ENCODE measurements at regions of chr2 and their contacts with region 1.

Region 1: DNA sequence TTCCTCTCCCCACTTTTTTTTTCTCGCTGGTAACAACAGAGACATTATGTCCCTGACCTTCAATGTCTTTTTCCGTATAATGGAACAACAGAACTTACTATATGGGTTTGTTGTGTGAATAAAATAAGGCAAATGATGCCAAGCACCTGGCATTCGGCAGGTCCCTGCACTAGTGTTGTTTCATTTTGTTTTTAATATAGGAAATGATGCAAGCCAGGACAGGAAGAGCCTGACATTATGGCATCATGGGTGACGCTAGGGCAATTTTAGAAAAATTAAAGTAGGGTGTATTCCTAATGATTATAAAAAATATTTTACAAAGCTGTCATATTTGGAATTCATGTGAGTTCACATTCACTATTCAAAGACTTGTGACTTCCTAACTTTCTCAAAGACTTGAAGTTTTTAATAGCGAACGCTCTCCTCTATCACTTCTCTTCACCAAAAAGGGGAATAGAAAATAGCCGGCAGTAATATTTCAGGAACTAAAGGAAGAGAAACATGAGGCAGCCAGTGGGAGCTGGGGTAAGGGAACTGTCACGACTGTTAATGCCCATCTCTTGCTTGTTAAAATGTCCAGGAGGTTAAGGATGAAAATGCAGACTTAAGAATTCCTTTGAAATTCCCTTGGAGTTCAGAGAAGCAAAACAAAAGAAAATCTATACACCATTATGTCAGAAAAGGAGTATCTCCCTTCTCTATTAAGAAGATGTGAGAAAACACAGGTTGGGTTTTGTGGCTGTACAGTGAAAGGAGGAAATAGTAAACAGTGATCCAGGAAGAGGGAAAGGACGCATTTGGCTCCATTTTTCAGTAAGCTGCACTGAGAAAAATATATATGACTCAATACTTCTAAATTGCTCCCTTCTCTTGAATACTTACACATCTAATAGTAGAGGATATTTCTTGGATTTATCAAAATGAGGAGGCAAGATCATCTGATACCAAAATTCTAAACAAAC is 60.2 kb downstream of the DPP4 start:
- DNase-seq: peak; percentile 48 to 78 (median 77)
- H3K4me3 ChIP-seq: peak overlapping the region; percentile 40 to 74 (median 73)
- H3K4me3 Mint-ChIP-seq: peak overlapping the region; percentile 57 to 72
- H3K27ac ChIP-seq: peak overlapping the region; percentile 60 to 84
- H3K27ac Mint-ChIP-seq: peak overlapping the region; percentile 77 to 96 (median 90)
- H3K4me1 ChIP-seq: peaks cover 20 to 32% of the 10 kb centered on the region in 2 donors
- H3K4me1 Mint-ChIP-seq: peaks cover 27% of the 10 kb centered on the region
- H3K27me3 ChIP-seq: no peaks in the 10 kb centered on the region
- H3K27me3 Mint-ChIP-seq: peaks cover 0 to 3% (median 0%) of the 10 kb centered on the region in 3 donors
- CTCF ChIP-seq: no peak

Region 2: DNA sequence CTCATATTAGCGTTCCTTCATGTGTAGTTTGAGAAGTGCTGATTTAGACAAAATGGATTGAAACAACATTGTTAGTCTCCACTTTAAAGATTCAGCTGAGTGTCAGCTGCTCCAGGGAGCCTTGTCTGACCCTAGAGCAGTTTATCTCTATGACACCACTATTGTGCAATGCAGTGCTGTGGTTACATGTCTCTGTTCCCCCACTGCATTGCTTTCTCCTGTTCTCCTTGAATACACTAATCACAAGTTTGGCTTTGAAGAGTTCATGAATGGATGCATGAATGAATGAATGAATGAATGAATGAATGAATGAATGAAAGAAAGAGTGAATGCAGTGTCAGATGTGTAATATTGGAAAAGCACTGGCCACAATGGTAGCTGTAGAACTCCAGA is 100.0 kb after region 1 on chr2:
- intact Hi-C with region 1: loop called in 1 of 2 experiments (anchors 5 kb)
- DNase-seq: peak; percentile 51 to 69 (median 62)
- H3K4me3 ChIP-seq: no peak overlapping the region
- H3K4me3 Mint-ChIP-seq: peak overlapping the region in 1 of 2 donors; percentile 15
- H3K27ac ChIP-seq: peak overlapping the region in 1 of 2 donors; percentile 38
- H3K27ac Mint-ChIP-seq: peak overlapping the region in 5 of 7 donors; percentile 25 to 78 (median 60)
- H3K4me1 ChIP-seq: peaks cover 35 to 41% of the 10 kb centered on the region in 2 donors
- H3K4me1 Mint-ChIP-seq: peaks cover 39% of the 10 kb centered on the region
- H3K27me3 ChIP-seq: no peaks in the 10 kb centered on the region
- H3K27me3 Mint-ChIP-seq: peaks cover 0 to 2% (median 2%) of the 10 kb centered on the region in 3 donors
- CTCF ChIP-seq: no peak

Region 3: DNA sequence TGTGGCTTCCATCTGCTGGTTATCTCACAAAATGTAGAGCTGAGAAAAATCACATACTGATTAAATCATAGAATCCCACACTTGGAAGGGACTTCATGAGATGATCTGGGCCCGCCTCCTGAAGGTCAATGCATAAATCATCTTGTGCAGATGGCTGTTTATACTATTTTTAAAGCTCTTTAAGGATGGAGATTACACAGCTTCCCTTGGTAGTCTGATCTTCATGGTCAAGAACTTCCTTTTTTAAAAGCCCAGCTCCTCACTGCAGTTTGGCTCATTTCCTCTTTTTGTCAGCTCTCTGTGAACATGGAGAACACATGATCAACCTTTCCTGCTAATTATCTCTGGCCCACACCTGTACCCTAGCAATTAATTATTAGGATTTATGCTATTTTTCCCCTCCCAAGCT is 112.3 kb after region 1 on chr2:
- intact Hi-C with region 1: loop called in 1 of 2 experiments (anchors 5 kb)
- DNase-seq: peak; percentile 53 to 67 (median 65)
- H3K4me3 ChIP-seq: no peak overlapping the region
- H3K4me3 Mint-ChIP-seq: no peak overlapping the region
- H3K27ac ChIP-seq: peak overlapping the region in 1 of 2 donors; percentile 23
- H3K27ac Mint-ChIP-seq: peak overlapping the region in 5 of 7 donors; percentile 29 to 76 (median 59)
- H3K4me1 ChIP-seq: peaks cover 16 to 17% of the 10 kb centered on the region in 2 donors
- H3K4me1 Mint-ChIP-seq: peaks cover 13% of the 10 kb centered on the region
- H3K27me3 ChIP-seq: no peaks in the 10 kb centered on the region
- H3K27me3 Mint-ChIP-seq: peaks cover 0 to 3% (median 0%) of the 10 kb centered on the region in 3 donors
- CTCF ChIP-seq: no peak

Region 4: GRCh38 chr2:162153608-162154224 is 139.9 kb after region 1 on chr2:
- intact Hi-C with region 1: no loop called
- DNase-seq: peak; percentile 15 to 48 (median 40)
- H3K4me3 ChIP-seq: no peak overlapping the region
- H3K4me3 Mint-ChIP-seq: peak overlapping the region in 1 of 2 donors; percentile 6
- H3K27ac ChIP-seq: no peak overlapping the region
- H3K27ac Mint-ChIP-seq: no peak overlapping the region
- H3K4me1 ChIP-seq: no peaks in the 10 kb centered on the region
- H3K4me1 Mint-ChIP-seq: peaks cover 5% of the 10 kb centered on the region
- H3K27me3 ChIP-seq: peaks cover 0 to 4% of the 10 kb centered on the region in 2 donors
- H3K27me3 Mint-ChIP-seq: peaks cover 3 to 6% (median 4%) of the 10 kb centered on the region in 3 donors
- CTCF ChIP-seq: peak; percentile 83